Colonic mucosa (tissue), 4 donors: ENCODE measurements at regions of chr1 and their contacts with region 1.

Region 1: GRCh38 chr1:203702130-203702577 is 62.8 kb upstream of the LAX1 start:
- DNase-seq: peak; percentile 60
- H3K4me3 ChIP-seq: no peak overlapping the region
- H3K27ac ChIP-seq: no peak overlapping the region
- H3K4me1 ChIP-seq: no peaks in the 10 kb centered on the region
- H3K27me3 ChIP-seq: no peaks in the 10 kb centered on the region
- CTCF ChIP-seq: peak; percentile 78

Region 2: DNA sequence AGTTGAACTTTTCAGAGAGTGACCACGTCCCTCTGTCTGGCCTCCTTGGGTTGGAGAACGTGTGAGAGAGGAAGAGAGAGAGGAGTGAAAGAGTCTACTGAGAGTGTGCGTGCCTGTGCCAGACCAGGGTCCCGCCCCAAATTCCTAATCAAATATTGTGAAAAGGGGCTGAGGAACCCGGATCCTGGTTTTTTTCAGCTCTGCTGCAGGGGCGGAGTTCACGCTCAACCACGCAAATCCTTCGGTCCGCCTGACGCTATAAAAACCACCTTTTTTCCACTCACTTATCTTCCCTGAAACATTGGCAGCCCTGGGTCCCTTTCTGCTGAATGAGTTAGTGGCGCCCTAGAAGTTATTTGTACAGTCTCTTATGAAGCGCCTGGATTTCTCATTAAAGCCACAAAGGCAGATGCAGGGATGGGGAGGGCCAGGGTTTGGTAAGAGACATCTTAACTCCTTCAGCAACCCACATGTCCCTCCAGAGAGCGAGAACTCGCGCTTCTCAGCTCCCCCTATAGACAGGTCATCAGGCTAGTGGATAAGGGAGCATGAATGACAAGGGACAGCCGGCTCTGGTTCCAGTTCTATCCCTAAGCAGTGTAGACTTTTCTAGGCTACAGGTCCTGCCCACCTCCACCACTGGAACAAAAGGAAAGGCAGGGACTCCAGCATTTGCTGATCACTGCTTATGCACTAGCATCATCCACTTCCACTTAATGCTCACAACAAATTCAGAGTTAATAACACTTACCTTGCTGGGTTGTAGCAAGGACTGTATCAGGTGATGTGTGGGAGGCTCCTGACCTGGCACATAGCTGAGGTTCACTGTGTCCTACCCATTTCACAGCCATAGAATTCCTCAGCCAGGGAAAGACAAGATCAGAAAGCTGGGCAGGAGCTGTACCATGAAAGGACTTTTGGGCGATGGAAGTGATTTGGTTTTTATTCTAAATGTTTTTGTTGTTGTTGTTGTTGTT is 350.8 kb before region 1 on chr1 and contains the start of gene FMOD:
- intact Hi-C with region 1: loop called (anchors 10 kb)
- DNase-seq: peak; percentile 66
- H3K4me3 ChIP-seq: no peak within 1 kb of the TSS
- H3K27ac ChIP-seq: peak within 1 kb of the TSS; percentile 22
- H3K4me1 ChIP-seq: no peaks in the 10 kb centered on the region
- H3K27me3 ChIP-seq: no peaks in the 10 kb centered on the region
- CTCF ChIP-seq: no peak
- total RNA-seq, gene FMOD: 38.6 to 49.3 TPM

Region 3: GRCh38 chr1:203504397-203505250 is 197.5 kb before region 1 on chr1:
- intact Hi-C with region 1: loop called (anchors 2 kb)
- DNase-seq: peak; percentile 85
- H3K4me3 ChIP-seq: no peak overlapping the region
- H3K27ac ChIP-seq: no peak overlapping the region
- H3K4me1 ChIP-seq: no peaks in the 10 kb centered on the region
- H3K27me3 ChIP-seq: no peaks in the 10 kb centered on the region
- CTCF ChIP-seq: peak; percentile 80

Region 4: DNA sequence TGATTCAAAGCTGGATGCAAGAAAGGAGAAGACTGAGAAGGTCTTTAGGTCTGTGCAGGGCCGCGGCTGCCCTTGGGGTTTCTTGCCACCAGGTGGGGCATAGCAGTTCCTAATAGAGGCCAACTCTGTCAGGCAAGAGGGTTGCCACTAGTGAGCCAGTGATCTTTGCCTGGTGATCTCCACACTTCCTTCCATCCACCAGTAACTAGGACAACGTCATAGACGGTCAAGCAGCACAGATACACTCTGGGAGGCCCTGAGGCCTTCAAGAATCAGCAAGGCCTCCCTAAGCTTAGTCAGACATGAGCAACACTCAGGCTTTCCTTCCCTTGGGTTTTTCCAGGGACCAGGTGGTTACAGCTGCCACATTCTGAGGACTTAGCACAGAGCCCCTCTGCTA is 108.4 kb before region 1 on chr1:
- intact Hi-C with region 1: loop called (anchors 5 kb)
- DNase-seq: peak; percentile 29
- H3K4me3 ChIP-seq: no peak overlapping the region
- H3K27ac ChIP-seq: no peak overlapping the region
- H3K4me1 ChIP-seq: no peaks in the 10 kb centered on the region
- H3K27me3 ChIP-seq: no peaks in the 10 kb centered on the region
- CTCF ChIP-seq: peak; percentile 40